ENCODE measurements at regions of chr3 and their contacts with region 1.

Region 1: DNA sequence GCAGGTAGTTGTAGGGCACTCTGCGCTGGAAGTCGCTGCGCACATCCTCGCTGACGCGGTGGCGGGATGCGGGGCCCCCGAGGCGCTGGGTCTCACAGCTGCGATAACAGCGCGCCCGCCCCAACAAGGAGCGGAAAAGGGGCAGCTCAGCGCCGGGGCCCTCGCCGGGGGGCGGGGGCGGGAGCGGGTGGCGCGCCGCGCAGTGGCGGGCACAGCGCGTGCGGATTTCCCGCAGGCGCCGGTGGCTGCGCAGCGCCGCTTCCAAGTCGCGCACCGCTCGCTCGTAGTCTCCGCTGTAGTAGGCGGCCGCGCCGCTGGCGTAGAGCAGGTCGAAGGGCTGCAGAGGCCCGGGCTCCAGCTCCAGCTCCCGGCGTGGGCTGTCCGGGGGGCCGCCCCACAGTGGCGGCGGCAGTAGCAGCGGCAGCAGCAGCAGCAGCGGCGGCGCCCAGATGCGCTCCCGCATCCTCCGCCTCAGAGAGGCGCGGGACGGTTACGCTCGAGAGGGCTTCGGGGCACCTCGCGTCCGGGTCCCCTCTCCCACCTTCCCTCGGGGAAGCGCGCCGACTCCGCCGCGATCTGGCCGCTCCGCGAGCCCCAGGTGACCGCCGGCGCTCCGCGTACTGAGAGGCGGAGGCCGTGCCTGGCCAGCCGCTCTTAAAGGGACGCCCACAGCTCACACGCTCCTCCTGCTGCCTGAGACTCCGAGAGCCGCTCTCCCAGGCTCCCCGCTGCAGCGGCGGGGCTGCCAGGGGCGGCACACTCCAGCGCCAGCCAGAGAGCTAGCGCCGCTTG is at the start of gene P3H2:
- DNase-seq: peak; percentile 9
- H3K4me3 Mint-ChIP-seq: peak within 1 kb of the TSS; percentile 58
- H3K27ac Mint-ChIP-seq: no peak within 1 kb of the TSS
- H3K4me1 Mint-ChIP-seq: peaks cover 4% of the 10 kb centered on the region
- H3K27me3 Mint-ChIP-seq: peaks cover 71% of the 10 kb centered on the region
- total RNA-seq, gene P3H2: not detected in 2 replicates

Region 2: DNA sequence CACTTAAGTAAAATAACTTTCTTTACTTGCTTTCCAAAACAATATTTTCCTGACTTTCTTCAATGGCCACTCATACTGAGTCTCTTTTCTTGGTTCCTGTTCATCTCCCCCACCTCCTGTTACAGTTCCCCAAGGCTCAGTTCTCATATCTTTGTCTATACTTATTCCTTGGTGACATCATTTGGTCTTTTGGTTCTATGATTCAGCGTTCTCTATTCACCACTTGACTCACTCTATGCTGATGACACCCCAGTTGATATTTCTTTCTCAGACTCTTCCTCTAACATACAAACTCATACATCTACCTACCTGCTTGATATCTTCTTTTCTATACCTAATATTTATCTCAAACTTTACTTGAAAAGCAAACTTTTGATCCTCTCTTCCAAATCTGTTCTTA is 85.3 kb after region 1 on chr3:
- intact Hi-C with region 1: loop called (anchors 5 kb)
- DNase-seq: no peak
- H3K4me3 Mint-ChIP-seq: no peak overlapping the region
- H3K27ac Mint-ChIP-seq: peak overlapping the region; percentile 31
- H3K4me1 Mint-ChIP-seq: peaks cover 11% of the 10 kb centered on the region
- H3K27me3 Mint-ChIP-seq: peaks cover 9% of the 10 kb centered on the region

Measured in activated T-helper 2 cell treated with anti-CD3 and anti-CD28 coated beads, Interferon-gamma antibody, Interleukin-2, Interleukin-4, amounts not matched to agents 10 μg/mL and 5 μg/mL and 100 μg/mL, durations not matched to agents 14 hours and 24 hours and 36 hours (primary cell).